Dorsolateral prefrontal cortex (tissue), 120 donors: ENCODE measurements at regions of chr6 and their contacts with region 1.

Region 1: DNA sequence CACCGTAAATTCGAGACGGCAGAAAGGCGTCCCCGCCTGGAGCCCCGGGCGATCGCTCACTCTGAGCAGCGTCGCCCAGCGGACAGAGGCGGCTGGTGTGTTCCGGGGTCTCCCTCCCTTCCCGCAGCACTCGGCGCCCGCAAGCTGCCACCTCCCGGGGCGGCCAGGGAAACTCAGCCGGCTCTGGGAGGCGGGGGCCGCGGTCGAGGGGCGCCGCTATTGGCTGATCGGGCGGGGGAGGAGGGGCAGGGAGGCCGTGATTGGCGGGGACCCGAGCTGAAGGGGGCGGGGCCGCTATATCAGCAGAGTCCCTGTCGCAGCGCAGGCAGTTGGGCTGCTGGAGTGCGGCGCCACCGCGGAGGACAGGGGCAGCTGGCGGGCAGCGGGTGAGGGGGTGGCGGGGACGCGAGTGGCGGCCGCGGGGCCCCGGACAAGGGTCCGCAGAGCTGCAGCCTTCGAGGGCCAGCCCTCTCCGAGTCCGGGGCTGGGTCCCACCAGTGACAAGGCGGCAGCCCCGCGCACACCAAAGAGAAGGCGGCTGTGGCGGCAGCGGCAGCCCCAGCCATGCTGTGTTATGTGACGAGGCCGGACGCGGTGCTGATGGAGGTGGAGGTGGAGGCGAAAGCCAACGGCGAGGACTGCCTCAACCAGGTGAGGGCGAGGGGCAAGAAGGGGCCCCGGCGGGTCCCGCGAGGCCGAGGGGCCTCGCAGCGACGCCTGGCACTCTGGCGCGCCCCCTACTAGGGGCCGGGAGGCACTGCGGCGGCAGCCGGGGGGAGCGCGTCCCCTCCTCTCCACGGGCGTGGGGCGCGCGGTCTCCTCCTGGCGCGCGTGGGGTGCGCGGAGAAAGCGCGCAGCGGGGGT is at the start of gene MYLIP:
- DNase-seq: peak; percentile 97 to 99 (median 98)
- H3K4me3 ChIP-seq: peak within 1 kb of the TSS; percentile 56 to 100 (median 99)
- H3K27ac ChIP-seq: peak within 1 kb of the TSS; percentile 82 to 100 (median 98)
- H3K27me3 ChIP-seq: no peaks in the 10 kb centered on the region
- CTCF ChIP-seq: peak; percentile 41 to 86 (median 71)
- total RNA-seq, gene MYLIP: 10.2 to 40.1 (median 21.7) TPM

Region 2: DNA sequence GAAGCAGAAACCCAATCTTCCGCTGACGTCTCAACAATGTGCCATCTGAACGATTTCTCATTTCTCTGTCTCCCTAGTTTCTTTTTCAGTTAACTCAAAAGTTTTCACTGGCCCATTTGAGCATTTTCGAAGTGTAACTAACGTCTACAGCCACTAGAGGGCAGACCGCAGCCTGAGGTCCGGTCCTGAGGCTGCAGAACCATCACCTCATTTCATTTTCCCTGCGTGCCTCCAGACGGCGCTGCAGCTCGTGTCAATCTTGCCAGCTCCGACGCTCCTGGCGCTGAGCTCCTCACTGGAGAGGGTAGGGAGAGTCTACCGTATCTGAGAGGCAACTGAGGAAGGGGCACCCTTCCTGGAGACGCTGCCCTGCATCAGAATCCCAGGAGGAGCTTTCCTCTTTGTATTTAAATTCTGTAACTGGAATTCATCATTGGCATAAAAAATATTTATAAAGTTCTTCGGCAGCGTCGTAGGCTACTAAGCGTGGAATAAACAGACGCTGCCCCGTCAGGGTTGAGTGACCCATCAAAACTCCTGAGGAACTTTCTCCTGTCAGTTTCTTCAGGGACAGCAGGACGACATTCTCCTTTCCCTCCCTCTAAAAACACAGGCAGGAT is 437.6 kb before region 1 on chr6:
- intact Hi-C with region 1: loop called (anchors 1 kb)
- DNase-seq: peak; percentile 66 to 86 (median 82)
- H3K4me3 ChIP-seq: peak overlapping the region in 57 of 59 donors; percentile 4 to 63 (median 45)
- H3K27ac ChIP-seq: no peak overlapping the region
- H3K27me3 ChIP-seq: no peaks in the 10 kb centered on the region
- CTCF ChIP-seq: peak; percentile 96 to 100 (median 100)

Region 3: DNA sequence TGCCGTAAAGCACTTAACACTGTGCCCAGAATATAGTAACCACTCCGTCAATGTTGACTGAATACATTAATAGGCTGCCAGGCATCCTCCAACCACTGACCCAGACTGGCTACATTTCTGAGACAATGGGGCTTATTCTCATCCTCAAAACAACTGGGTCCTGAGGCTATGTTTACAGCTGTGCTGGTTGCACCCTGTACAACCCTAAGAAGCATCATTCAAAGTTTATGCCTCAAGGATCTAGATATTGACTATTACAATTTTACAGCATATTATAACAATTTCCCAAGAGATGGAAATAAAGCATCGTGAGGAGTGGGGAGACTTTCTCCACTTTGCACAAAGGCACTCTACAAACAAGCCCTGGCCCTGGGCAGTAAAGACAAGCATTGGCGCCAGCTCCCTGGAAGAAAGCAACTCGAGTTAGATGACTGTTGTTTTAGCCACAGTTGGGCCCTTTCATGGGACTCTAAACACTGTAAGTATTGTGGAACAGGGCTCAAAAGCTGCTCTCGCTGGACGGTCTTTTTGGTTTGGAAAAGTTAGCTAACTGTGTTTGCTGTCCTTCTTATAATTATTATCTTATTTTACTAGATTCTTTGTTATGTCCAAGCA is 30.1 kb after region 1 on chr6:
- intact Hi-C with region 1: loop called in 1 of 2 experiments (anchors 1 kb)
- DNase-seq: peak in 9 of 10 donors; percentile 10 to 85 (median 65)
- H3K4me3 ChIP-seq: peak overlapping the region in 27 of 59 donors; percentile 0 to 48 (median 15)
- H3K27ac ChIP-seq: peak overlapping the region; percentile 4 to 99 (median 91)
- H3K27me3 ChIP-seq: no peaks in the 10 kb centered on the region
- CTCF ChIP-seq: peak in 7 of 56 donors; percentile 6 to 33 (median 12)

Region 4: DNA sequence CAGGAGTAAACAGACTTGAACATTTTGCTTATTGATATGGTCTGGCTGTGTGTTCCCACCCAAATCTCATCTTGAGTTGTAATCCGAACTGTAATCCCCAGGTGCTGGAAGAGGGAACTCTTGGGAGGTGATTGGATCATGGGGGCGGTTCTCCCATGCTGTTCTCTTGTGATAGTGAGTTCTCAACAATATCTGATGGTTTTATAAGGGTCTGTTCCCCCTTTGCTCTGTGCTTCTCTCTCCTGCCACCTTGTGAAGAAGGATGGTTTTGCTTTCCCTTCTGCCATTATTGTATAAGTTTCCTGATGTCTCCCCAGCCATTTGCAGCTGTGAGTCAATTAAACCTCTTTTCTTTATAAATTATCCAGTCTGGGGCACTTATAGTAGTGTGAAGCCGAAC is 39.9 kb after region 1 on chr6:
- intact Hi-C with region 1: loop called in 1 of 2 experiments (anchors 5 kb)
- DNase-seq: no peak
- H3K4me3 ChIP-seq: peak overlapping the region in 1 of 59 donors; percentile 14
- H3K27ac ChIP-seq: peak overlapping the region in 2 of 59 donors; percentile 20 to 24
- H3K27me3 ChIP-seq: no peaks in the 10 kb centered on the region
- CTCF ChIP-seq: peak; percentile 13 to 80 (median 56)

Region 5: GRCh38 chr6:16183187-16183664 is 54.2 kb after region 1 on chr6:
- intact Hi-C with region 1: loop called in 1 of 2 experiments (anchors 10 kb)
- DNase-seq: no peak
- H3K4me3 ChIP-seq: peak overlapping the region in 19 of 59 donors; percentile 6 to 42 (median 24)
- H3K27ac ChIP-seq: peak overlapping the region in 12 of 59 donors; percentile 1 to 64 (median 32)
- H3K27me3 ChIP-seq: peaks cover 0 to 3% (median 0%) of the 10 kb centered on the region in 45 donors
- CTCF ChIP-seq: peak; percentile 67 to 93 (median 84)

Region 6: DNA sequence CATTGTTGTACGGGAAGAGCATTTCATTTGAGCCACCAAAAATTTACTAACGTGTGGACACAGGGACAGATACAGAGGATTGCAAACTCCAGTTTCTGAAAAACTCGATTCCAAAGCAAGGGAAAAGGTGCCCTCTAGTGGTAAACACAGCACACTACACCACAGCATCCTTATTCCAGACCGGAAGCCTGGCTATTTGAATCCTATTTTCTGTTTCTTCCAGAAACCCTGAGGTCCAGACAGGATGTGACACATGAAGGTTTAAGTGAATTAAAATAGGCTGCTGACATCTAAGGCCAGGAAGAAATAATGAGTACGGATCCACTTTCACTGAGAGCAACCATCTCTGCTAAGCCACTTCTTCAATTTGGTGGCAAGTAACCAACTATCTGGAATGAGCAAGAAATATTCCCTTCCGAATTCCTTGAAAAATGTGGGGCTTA is 77.6 kb after region 1 on chr6:
- intact Hi-C with region 1: loop called in 1 of 2 experiments (anchors 2 kb)
- DNase-seq: peak in 4 of 10 donors; percentile 47 to 77 (median 53)
- H3K4me3 ChIP-seq: no peak overlapping the region
- H3K27ac ChIP-seq: no peak overlapping the region
- H3K27me3 ChIP-seq: peaks cover 0 to 12% (median 0%) of the 10 kb centered on the region in 45 donors
- CTCF ChIP-seq: peak; percentile 93 to 100 (median 98)

Region 7: GRCh38 chr6:16345437-16346330 is 216.7 kb after region 1 on chr6:
- intact Hi-C with region 1: no loop called
- DNase-seq: no peak
- H3K4me3 ChIP-seq: no peak overlapping the region
- H3K27ac ChIP-seq: peak overlapping the region in 1 of 59 donors; percentile 8
- H3K27me3 ChIP-seq: no peaks in the 10 kb centered on the region
- CTCF ChIP-seq: no peak